Activated T-helper 1 cell treated with anti-CD3 and anti-CD28 coated beads, Interleukin-12 subunit alpha, Interleukin-12 subunit beta, Interleukin-2, Interleukin-4 antibody, amounts not matched to agents 30 ng/mL and 10 ng/mL and 1 ng/mL, durations not matched to agents 14 hours and 24 hours and 36 hours (primary cell): ENCODE measurements at regions of chr4 and their contacts with region 1.

Region 1: GRCh38 chr4:127889903-127890302 is 9.2 kb downstream of the PLK4 start:
- DNase-seq: no peak
- H3K4me3 Mint-ChIP-seq: no peak overlapping the region
- H3K27ac Mint-ChIP-seq: no peak overlapping the region
- H3K4me1 Mint-ChIP-seq: peaks cover 39% of the 10 kb centered on the region
- H3K27me3 Mint-ChIP-seq: no peaks in the 10 kb centered on the region

Region 2: GRCh38 chr4:127778102-127778501 is 111.8 kb before region 1 on chr4:
- intact Hi-C with region 1: no loop called
- DNase-seq: no peak
- H3K4me3 Mint-ChIP-seq: no peak overlapping the region
- H3K27ac Mint-ChIP-seq: no peak overlapping the region
- H3K4me1 Mint-ChIP-seq: peaks cover 23% of the 10 kb centered on the region
- H3K27me3 Mint-ChIP-seq: peaks cover 59% of the 10 kb centered on the region

Region 3: DNA sequence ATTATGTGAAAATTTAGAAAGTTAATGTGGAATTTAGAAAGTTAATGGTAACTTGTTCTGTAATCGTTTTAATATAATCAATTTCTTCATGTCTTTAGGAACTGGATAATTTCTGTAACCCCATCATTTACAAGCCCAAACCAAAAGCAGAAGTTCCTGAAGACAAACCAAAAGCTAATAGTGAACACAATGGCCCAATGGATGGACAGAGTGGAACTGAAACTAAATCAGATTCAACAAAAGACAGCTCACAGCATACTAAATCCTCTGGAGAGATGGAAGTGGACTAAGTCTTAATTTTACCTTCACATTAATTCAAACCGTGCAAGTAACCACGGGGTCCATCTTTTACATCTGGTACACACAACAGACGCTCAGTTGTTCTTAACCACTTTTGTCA is 57.3 kb before region 1 on chr4:
- intact Hi-C with region 1: no loop called
- DNase-seq: no peak
- H3K4me3 Mint-ChIP-seq: no peak overlapping the region
- H3K27ac Mint-ChIP-seq: no peak overlapping the region
- H3K4me1 Mint-ChIP-seq: no peaks in the 10 kb centered on the region
- H3K27me3 Mint-ChIP-seq: peaks cover 1% of the 10 kb centered on the region

Region 4: DNA sequence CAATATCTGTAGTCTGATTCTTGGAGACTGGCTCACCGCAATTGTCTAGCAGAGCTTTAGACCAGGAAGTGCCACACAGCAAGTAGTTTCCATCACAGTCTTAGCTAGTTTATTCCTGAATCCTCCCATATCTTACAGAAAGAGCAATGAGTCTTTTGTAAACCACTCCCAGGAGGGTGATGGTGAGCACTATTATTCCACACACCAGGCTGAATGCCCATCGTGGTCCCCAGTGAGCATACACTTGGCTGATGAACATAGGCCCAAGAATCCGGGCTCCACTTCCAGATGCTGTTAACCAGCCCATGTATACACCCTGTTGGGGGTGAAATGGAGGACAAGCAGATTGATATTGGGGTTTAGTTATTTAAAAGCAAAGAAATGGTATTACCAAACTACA is 30.6 kb after region 1 on chr4:
- intact Hi-C with region 1: loop called (anchors 2 kb)
- DNase-seq: no peak
- H3K4me3 Mint-ChIP-seq: no peak overlapping the region
- H3K27ac Mint-ChIP-seq: no peak overlapping the region
- H3K4me1 Mint-ChIP-seq: no peaks in the 10 kb centered on the region
- H3K27me3 Mint-ChIP-seq: no peaks in the 10 kb centered on the region

Region 5: GRCh38 chr4:128163177-128164117 is 273.5 kb after region 1 on chr4:
- intact Hi-C with region 1: no loop called
- DNase-seq: no peak
- H3K4me3 Mint-ChIP-seq: no peak overlapping the region
- H3K27ac Mint-ChIP-seq: no peak overlapping the region
- H3K4me1 Mint-ChIP-seq: no peaks in the 10 kb centered on the region
- H3K27me3 Mint-ChIP-seq: no peaks in the 10 kb centered on the region